ENCODE measurements at regions of chr2 and their contacts with region 1.

Region 1: DNA sequence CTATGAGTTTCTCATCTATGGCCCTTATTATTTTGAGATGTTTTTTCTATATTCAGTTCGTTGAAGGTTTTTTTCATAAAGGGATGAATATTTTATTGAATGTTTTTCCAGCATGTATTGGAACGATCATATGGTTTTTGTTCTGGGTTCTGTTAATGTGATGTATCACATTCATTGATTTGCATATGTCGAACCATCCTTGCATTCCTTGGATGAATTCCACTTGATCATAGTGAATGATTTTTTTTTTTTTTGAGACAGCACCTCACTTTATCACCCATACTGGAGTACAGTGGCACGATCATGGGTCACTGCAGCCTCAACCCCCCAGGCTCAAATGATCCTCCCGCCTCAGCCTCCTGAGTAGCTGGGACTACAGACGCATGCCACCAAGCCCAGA is 5.5 kb upstream of the NEMP2 start:
- DNase-seq: no peak
- ATAC-seq: no peak

Region 2: GRCh38 chr2:188811522-188811921 is 1728.5 kb before region 1 on chr2:
- intact Hi-C with region 1: no loop called
- DNase-seq: no peak
- ATAC-seq: no peak

Region 3: GRCh38 chr2:190627448-190628412 is 87.7 kb after region 1 on chr2:
- intact Hi-C with region 1: no loop called
- DNase-seq: peak; percentile 45 to 58
- ATAC-seq: peak; percentile 94

Region 4: DNA sequence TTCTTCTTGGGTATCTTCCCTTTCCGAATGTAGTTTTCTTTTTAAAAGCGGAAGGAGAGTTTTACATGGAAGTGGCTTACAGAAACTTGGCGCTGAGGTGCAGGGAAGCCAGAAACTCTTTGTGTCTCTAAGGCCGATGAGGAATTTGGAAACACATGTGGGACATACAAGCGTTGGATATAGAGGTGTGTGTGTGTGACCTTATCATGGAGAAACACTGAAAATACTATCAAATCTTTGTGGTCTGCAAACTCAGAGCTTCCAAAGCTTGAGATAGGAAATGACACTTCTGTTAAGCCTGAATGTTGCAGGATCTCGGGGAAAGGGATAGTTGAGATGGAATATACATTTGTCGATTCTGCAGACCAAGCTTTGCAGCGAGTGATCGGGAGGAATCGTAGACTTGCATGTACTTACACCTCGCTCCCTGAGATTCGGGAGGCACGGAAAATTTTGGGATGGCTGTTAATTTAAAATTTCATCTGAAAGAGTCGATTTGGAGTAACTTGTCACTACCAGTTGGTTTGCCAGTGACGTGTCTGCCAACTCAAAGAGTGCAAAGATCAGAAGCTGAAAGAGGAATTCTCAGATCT is 109.8 kb after region 1 on chr2:
- intact Hi-C with region 1: loop called in 1 of 2 experiments (anchors 10 kb)
- DNase-seq: peak in 1 of 2 donors; percentile 15
- ATAC-seq: no peak